Activated B cell treated with CpG ODN at 0.5 μM for 24 hours (primary cell): ENCODE measurements at regions of chr19 and their contacts with region 1.

Region 1: GRCh38 chr19:18091217-18091608 is 4.5 kb upstream of the IL12RB1 start:
- DNase-seq: peak; percentile 58
- ATAC-seq: peak; percentile 68
- H3K4me3 Mint-ChIP-seq: peak overlapping the region; percentile 67
- H3K27ac Mint-ChIP-seq: peak overlapping the region; percentile 97
- H3K4me1 Mint-ChIP-seq: peaks cover 60% of the 10 kb centered on the region
- H3K27me3 Mint-ChIP-seq: no peaks in the 10 kb centered on the region
- CTCF ChIP-seq: no peak

Region 2: DNA sequence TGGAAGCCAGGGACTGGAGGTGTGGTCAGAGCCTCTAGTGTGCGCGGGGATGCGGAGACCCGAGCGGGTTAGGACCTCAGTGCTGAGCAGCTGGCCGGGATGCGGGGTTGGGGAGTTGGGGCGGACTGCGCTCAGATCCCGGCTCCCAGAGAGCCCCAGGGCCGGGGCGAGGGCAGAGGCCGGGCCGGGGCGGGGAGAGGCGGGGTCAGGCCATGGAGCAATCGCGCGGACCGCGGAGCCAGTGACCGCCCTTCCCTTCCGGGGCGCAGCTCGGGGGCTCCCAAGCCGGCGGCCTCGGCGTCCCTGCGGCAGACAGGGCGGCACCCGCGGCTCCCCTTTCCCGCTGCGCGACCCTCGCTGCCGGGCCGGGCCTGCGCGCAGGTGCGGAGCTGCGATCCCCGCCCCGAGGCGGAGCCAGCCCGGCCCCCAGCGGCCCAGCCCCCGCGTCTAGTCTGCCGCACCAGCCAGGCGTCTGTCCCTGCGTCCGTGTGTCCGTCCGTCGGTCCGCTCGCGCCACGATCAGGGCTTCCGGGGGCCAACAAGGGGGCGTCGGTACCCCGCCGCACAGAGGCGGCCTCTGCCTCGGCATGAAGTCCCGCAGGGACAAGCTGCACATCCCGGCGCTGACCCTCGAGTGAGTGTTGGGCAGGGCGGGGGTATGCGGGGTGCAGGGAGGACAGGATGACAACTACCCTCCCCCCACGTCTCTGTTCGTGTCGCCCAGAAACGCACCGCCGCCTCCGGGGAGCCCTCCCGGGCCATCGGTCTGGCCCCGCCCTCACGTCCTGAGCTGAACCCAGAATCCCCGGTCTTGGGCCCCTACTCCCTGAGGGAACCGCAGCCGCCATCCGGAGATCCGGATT is 18.8 kb after region 1 on chr19:
- CTCF ChIA-PET with region 1: interaction called, 4 read pairs
- POLR2A ChIA-PET with region 1: interaction called, 146 read pairs
- intact Hi-C with region 1: loop called (anchors 1 kb)
- DNase-seq: peak; percentile 62
- ATAC-seq: peak; percentile 57
- H3K4me3 Mint-ChIP-seq: peak overlapping the region; percentile 80
- H3K27ac Mint-ChIP-seq: peak overlapping the region; percentile 83
- H3K4me1 Mint-ChIP-seq: peaks cover 54% of the 10 kb centered on the region
- H3K27me3 Mint-ChIP-seq: no peaks in the 10 kb centered on the region
- CTCF ChIP-seq: no peak

Region 3: GRCh38 chr19:18328340-18329034 is 237.3 kb after region 1 on chr19:
- CTCF ChIA-PET with region 1: no interaction called
- POLR2A ChIA-PET with region 1: no interaction called
- intact Hi-C with region 1: no loop called
- DNase-seq: peak; percentile 56
- ATAC-seq: peak; percentile 98
- H3K4me3 Mint-ChIP-seq: peak overlapping the region; percentile 56
- H3K27ac Mint-ChIP-seq: peak overlapping the region; percentile 20
- H3K4me1 Mint-ChIP-seq: peaks cover 14% of the 10 kb centered on the region
- H3K27me3 Mint-ChIP-seq: peaks cover 8% of the 10 kb centered on the region
- CTCF ChIP-seq: peak; percentile 53